Transverse colon (tissue), 4 donors: ENCODE measurements at regions of chr12 and their contacts with region 1.

Region 1: DNA sequence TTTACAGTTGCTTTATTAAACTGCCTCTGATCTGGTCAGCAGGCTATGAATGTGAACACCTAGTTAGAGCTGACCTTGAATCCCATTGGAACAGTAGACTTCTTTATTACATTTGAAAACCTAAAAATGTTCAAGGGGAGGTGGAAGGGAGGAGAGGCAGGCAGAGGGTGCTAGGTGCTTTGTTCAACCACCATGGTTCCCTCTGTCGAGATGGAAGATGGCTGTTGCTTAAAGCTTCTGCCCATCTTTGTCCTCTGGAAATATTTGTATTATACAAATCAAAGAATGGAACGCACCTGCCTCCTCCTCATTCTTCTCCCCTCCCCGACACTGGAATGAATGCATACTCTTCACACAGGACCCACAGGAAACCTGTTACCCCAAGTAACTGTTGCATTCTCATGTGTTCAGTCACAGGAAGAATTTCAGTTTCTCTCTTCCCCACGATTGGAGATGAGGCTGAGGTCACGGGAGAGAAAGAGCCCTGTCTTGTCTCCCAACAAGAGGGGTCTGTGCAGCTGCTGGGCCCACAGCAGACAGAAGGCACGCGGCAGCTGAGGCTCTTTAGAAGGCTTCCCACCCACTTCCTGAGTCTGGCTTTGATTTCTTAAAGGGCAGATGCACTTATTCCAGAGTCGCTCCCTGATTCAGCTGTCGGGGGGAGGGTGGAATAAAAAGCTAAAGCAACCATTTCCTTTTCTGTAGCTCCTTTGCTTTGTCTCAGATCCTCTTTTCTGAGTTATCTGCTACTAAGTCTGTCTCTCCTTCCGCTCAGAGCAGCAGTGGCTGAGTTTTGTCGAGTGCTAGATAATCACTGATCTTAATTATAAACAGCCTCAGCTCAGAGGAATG is 217.9 kb upstream of the BTG1 start:
- DNase-seq: peak; percentile 50
- H3K4me3 ChIP-seq: peak overlapping the region in 2 of 4 donors; percentile 1 to 18
- H3K27ac ChIP-seq: peak overlapping the region; percentile 43 to 69 (median 55)
- H3K4me1 ChIP-seq: peaks cover 4 to 14% (median 8%) of the 10 kb centered on the region in 4 donors
- H3K27me3 ChIP-seq: no peaks in the 10 kb centered on the region
- CTCF ChIP-seq: no peak
- EP300 ChIP-seq: no peak
- POLR2A ChIP-seq: no peak

Region 2: GRCh38 chr12:92493816-92494215 is 130.3 kb after region 1 on chr12:
- in situ Hi-C with region 1: loop called in 1 of 4 experiments (anchors 10 kb)
- intact Hi-C with region 1: no loop called
- DNase-seq: no peak
- H3K4me3 ChIP-seq: no peak overlapping the region
- H3K27ac ChIP-seq: no peak overlapping the region
- H3K4me1 ChIP-seq: no peaks in the 10 kb centered on the region
- H3K27me3 ChIP-seq: no peaks in the 10 kb centered on the region
- CTCF ChIP-seq: no peak
- EP300 ChIP-seq: no peak
- POLR2A ChIP-seq: no peak